Mammary epithelial cell (primary cell): ENCODE measurements at regions of chr14 and their contacts with region 1.

Region 1: GRCh38 chr14:104229534-104230055 is 91.2 kb downstream of the KIF26A start:
- DNase-seq: no peak
- H3K4me3 ChIP-seq: no peak overlapping the region
- H3K27ac ChIP-seq: no peak overlapping the region
- H3K4me1 ChIP-seq: no peaks in the 10 kb centered on the region
- H3K27me3 ChIP-seq: no peaks in the 10 kb centered on the region
- CTCF ChIP-seq: no peak

Region 2: DNA sequence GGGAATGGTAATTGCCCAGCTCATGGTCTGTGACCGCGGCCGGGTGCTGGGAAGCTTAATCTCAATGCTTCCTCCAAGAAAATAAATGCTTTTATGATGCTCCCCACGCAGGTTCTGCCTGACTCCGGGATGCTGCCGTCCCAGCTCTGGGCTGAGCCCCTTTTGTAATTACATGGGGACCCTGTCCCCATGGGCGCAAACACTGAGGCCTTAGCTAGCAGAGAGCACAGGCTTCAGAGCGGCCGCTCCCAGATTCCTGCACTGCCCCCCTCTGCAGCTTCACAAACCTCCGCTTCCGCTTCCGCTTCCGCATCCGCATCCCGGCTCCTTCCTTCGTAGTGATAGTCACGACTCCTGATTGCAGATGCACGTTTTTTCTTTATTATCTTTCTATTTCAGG is 38.3 kb after region 1 on chr14:
- CTCF ChIA-PET with region 1: no interaction called
- dilution Hi-C with region 1: no loop called
- in situ Hi-C with region 1: no loop called
- intact Hi-C with region 1: no loop called
- DNase-seq: no peak
- H3K4me3 ChIP-seq: no peak overlapping the region
- H3K27ac ChIP-seq: no peak overlapping the region
- H3K4me1 ChIP-seq: no peaks in the 10 kb centered on the region
- H3K27me3 ChIP-seq: no peaks in the 10 kb centered on the region
- CTCF ChIP-seq: no peak

Region 3: DNA sequence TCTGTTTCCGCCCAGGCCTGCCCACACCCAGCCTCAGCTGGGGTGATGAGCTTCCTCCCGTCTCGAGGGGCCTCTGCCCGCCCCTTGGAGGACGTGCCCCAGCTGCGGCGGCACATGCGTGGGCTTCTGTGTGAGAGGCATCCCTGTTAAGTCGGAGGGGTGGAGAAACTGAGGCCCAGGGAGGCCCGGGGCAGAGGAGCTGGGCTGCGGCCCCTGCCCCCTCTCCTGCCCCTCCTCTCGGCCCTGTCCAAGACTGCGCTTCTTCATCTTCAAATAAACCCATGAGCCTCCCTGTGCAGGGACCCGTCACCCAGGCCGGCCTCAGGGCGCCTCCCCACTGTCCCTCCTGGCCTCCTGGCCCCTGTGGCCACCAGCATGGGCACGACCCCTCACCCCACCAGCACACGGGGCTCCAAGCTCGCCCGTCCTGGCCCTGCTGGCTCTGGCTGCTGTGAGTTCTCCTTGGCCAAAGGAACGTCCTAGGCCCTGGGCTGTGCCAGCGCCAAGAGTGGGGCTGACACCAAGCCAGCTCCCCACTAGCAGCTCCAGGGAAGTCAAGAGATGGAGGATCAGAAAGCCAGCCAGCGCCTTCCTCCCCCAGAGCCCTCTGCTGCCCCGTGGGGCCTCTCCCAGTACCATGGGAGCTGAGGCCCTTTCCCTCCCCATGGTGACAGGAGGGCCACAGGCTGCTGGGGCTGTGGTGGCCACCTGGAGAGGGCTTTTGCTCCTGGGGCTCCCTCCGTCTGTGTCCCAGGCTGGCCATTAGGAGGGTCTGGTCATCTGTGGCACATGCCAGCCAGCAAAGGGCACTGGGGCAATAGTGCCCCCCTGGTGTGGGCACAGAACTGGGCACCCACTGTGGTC is 89.2 kb after region 1 on chr14:
- CTCF ChIA-PET with region 1: no interaction called
- dilution Hi-C with region 1: no loop called
- in situ Hi-C with region 1: no loop called
- intact Hi-C with region 1: no loop called
- DNase-seq: no peak
- H3K4me3 ChIP-seq: no peak overlapping the region
- H3K27ac ChIP-seq: no peak overlapping the region
- H3K4me1 ChIP-seq: no peaks in the 10 kb centered on the region
- H3K27me3 ChIP-seq: no peaks in the 10 kb centered on the region
- CTCF ChIP-seq: no peak

Region 4: GRCh38 chr14:104331871-104332605 is 102.4 kb after region 1 on chr14:
- CTCF ChIA-PET with region 1: no interaction called
- dilution Hi-C with region 1: loop called (anchors 5 kb)
- in situ Hi-C with region 1: no loop called
- intact Hi-C with region 1: no loop called
- DNase-seq: no peak
- H3K4me3 ChIP-seq: no peak overlapping the region
- H3K27ac ChIP-seq: no peak overlapping the region
- H3K4me1 ChIP-seq: no peaks in the 10 kb centered on the region
- H3K27me3 ChIP-seq: no peaks in the 10 kb centered on the region
- CTCF ChIP-seq: no peak